Activated naive CD4-positive, alpha-beta T cell treated with anti-CD3 and anti-CD28 coated beads for 36 hours (primary cell): ENCODE measurements at regions of chr18 and their contacts with region 1.

Region 1: DNA sequence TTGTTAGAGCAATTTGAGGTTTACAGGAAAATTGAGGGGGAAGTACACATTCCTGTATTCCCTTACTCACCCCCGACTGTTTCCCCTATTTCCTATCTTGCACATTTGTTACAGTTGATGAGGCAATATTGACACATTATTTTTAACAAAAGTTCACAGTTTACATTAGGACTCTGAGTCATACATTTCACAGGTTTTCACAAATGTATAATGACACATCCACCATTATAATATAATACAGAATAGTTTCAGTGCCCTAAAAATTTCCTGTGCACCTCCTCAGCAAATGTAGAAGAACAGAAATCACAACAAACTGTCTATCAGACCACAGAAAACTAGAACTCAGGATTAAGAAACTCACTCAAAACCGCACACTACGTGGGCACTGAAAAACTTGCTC is 160.6 kb upstream of the RMP24 start:
- DNase-seq: no peak
- H3K4me3 Mint-ChIP-seq: no peak overlapping the region
- H3K27ac Mint-ChIP-seq: peak overlapping the region; percentile 69
- H3K4me1 Mint-ChIP-seq: peaks cover 9% of the 10 kb centered on the region
- H3K27me3 Mint-ChIP-seq: peaks cover 21% of the 10 kb centered on the region

Region 2: GRCh38 chr18:35827275-35827902 is 15.5 kb after region 1 on chr18:
- CTCF ChIA-PET with region 1: no interaction called
- intact Hi-C with region 1: loop called (anchors 1 kb)
- DNase-seq: peak; percentile 62
- H3K4me3 Mint-ChIP-seq: no peak overlapping the region
- H3K27ac Mint-ChIP-seq: peak overlapping the region; percentile 75
- H3K4me1 Mint-ChIP-seq: peaks cover 15% of the 10 kb centered on the region
- H3K27me3 Mint-ChIP-seq: peaks cover 22% of the 10 kb centered on the region

Region 3: GRCh38 chr18:35993013-35993412 is 181.1 kb after region 1 on chr18:
- CTCF ChIA-PET with region 1: no interaction called
- intact Hi-C with region 1: no loop called
- DNase-seq: no peak
- H3K4me3 Mint-ChIP-seq: no peak overlapping the region
- H3K27ac Mint-ChIP-seq: no peak overlapping the region
- H3K4me1 Mint-ChIP-seq: no peaks in the 10 kb centered on the region
- H3K27me3 Mint-ChIP-seq: no peaks in the 10 kb centered on the region